HepG2 (cell line): ENCODE measurements at regions of chr18 and their contacts with region 1.

Region 1: DNA sequence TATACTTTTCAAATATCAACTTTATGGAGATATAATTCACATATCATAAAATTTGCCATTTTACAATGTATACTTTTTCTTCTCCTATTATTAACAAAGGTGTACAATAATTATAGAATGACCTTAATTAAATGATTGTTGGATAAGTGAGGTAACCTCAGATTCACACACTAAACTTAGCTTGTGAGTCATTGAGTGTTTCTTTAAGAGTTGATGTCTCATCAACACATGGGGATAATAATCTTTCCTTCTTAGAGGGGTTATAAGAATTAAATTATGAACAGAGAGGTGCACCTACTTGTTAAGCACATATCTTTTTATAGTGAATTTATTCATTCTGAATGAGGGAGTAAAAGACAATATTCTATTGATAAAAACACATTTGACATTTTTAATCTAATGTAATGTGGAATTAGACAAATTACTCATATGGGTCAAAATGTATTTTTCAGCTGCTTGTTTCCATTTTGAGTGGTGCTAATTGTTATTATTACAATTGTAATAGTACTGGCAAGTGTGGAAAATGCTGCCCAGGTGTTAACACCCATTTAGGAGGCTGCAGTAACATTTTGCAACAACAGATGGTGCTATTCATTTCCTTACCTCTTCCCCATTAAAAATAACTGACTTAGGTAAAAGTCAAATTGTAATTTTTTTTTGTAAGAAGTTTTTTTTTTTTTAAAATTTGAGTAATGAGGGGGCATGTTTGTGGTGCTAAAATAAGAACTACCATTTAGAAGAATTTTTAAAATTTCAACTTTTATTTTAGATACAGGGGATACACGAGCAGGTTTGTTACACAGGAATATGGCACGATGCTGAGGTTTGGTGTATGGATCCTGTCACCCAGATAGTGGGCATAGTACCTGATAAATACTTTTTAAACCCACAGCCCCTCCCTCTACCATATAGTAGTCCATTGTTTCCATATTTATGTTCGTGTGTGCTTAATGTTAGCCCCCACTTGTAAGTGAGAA is 32.1 kb upstream of the DYNAP start:
- DNase-seq: peak; percentile 11
- ATAC-seq: no peak
- H3K4me3 ChIP-seq: no peak overlapping the region
- H3K27ac ChIP-seq: no peak overlapping the region
- H3K4me1 ChIP-seq: no peaks in the 10 kb centered on the region
- H3K27me3 ChIP-seq: no peaks in the 10 kb centered on the region
- CTCF ChIP-seq: peak; percentile 46
- EP300 ChIP-seq: no peak
- POLR2A ChIP-seq: no peak
- RAD21 ChIP-seq: no peak

Region 2: DNA sequence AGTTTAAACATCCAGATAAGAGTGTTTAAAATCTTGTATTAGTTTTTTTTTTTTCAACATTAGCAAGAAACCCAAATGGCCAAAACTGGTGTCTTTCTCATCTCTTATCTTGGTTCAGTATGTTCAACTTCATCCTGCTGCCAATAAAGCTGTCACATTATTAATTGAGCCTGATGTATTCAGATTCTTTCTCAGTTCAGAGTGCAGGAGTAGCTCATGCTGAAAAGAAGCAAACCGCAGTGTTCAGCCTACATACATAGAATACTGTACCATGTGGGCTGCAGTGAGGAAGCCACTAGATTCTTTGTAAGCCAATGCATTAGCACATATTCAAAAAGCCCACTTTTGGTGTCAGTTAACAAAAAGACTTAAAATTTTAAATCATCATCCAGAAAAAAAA is 125.0 kb before region 1 on chr18:
- CTCF ChIA-PET with region 1: no interaction called
- POLR2A ChIA-PET with region 1: no interaction called
- in situ Hi-C with region 1: no loop called
- intact Hi-C with region 1: no loop called
- DNase-seq: no peak
- ATAC-seq: no peak
- H3K4me3 ChIP-seq: no peak overlapping the region
- H3K27ac ChIP-seq: no peak overlapping the region
- H3K4me1 ChIP-seq: no peaks in the 10 kb centered on the region
- H3K27me3 ChIP-seq: no peaks in the 10 kb centered on the region
- CTCF ChIP-seq: no peak
- EP300 ChIP-seq: no peak
- POLR2A ChIP-seq: no peak
- RAD21 ChIP-seq: no peak

Region 3: GRCh38 chr18:54647176-54647575 is 88.3 kb after region 1 on chr18:
- CTCF ChIA-PET with region 1: interaction called, 4 read pairs
- POLR2A ChIA-PET with region 1: no interaction called
- in situ Hi-C with region 1: no loop called
- intact Hi-C with region 1: loop called (anchors 1 kb)
- DNase-seq: peak; percentile 37
- ATAC-seq: peak; percentile 71; the same call in 2 of the 3 replicates
- H3K4me3 ChIP-seq: no peak overlapping the region
- H3K27ac ChIP-seq: no peak overlapping the region
- H3K4me1 ChIP-seq: no peaks in the 10 kb centered on the region
- H3K27me3 ChIP-seq: no peaks in the 10 kb centered on the region; a peak in 1 of 5 replicates
- CTCF ChIP-seq: peak; percentile 50
- EP300 ChIP-seq: no peak
- POLR2A ChIP-seq: no peak
- RAD21 ChIP-seq: no peak

Region 4: GRCh38 chr18:54671291-54671881 is 112.5 kb after region 1 on chr18:
- CTCF ChIA-PET with region 1: interaction called, 15 read pairs
- POLR2A ChIA-PET with region 1: no interaction called
- in situ Hi-C with region 1: loop called (anchors 10 kb)
- intact Hi-C with region 1: loop called (anchors 1 kb)
- DNase-seq: peak; percentile 19
- ATAC-seq: no peak
- H3K4me3 ChIP-seq: no peak overlapping the region
- H3K27ac ChIP-seq: no peak overlapping the region
- H3K4me1 ChIP-seq: no peaks in the 10 kb centered on the region
- H3K27me3 ChIP-seq: no peaks in the 10 kb centered on the region
- CTCF ChIP-seq: peak; percentile 47
- EP300 ChIP-seq: no peak
- POLR2A ChIP-seq: no peak
- RAD21 ChIP-seq: no peak

Region 5: DNA sequence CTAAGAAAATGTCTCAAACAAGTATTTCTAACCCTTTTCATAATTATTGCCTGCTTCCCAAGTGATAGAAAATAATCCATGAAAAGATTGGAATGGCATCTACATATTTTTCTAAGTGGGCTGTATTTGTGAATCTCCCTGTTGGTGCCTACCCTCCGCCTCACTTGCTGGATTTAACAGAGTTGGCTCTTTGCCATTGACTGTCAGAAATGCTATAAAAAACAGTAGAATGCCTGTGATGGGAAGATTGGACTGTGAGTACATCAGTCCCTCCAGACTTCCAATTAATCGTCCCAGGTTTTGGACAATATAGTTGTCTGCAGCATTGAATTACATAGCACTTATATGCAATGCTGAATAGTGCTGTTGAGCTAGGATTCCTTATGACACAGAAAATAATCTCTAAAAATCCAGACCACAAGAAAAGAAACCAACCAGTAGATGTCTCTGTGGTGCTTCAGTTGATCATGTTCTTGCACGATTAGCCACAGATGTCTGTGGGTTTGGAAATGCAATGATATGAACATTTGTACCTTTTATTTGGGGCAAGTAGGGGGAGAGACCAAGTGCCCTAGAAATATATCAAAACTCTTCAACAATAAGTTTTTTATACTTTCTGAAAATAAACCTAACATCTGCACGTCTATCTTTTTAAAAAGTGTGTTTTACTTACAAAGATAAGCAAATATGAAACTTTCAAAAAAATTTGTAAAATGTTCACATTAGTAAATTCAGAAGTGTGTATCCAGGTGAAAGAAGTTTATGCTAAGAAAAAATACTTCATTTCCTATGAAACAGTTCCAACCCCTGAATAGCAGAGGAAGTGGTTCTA is 120.6 kb after region 1 on chr18:
- CTCF ChIA-PET with region 1: no interaction called
- POLR2A ChIA-PET with region 1: no interaction called
- in situ Hi-C with region 1: loop called (anchors 10 kb)
- intact Hi-C with region 1: no loop called
- DNase-seq: peak; percentile 25
- ATAC-seq: peak; percentile 68
- H3K4me3 ChIP-seq: no peak overlapping the region
- H3K27ac ChIP-seq: no peak overlapping the region
- H3K4me1 ChIP-seq: no peaks in the 10 kb centered on the region
- H3K27me3 ChIP-seq: no peaks in the 10 kb centered on the region
- CTCF ChIP-seq: peak; percentile 63
- EP300 ChIP-seq: no peak
- POLR2A ChIP-seq: no peak
- RAD21 ChIP-seq: peak; percentile 19; the same call in 1 of the 2 replicates